GM23248 (cell line): ENCODE measurements at regions of chr14 and their contacts with region 1.

Region 1: GRCh38 chr14:29558516-29558915 is 369.1 kb downstream of the PRKD1 start:
- DNase-seq: peak; percentile 40
- H3K4me3 ChIP-seq: no peak overlapping the region
- H3K27ac ChIP-seq: no peak overlapping the region
- H3K4me1 ChIP-seq: peaks cover 11% of the 10 kb centered on the region
- H3K27me3 ChIP-seq: no peaks in the 10 kb centered on the region

Region 2: DNA sequence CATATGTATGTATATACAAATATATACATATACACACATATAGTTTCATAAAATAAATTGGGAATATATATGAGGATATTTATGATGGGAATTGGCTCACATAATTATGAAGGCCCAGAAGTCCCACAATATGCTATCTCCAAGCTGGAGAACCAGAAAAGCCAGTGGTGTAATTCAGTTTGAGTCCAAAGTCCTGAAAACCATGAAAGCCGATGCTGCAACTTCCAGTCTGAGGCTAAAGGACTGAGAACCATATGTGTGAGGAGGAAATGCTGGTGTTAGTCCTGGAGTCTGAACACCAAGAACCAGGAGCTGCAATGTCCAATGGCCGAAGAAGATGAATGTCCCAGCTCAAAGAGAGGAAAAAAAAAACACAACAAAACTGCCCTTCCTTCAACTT is 434.6 kb after region 1 on chr14:
- in situ Hi-C with region 1: no loop called
- DNase-seq: no peak
- H3K4me3 ChIP-seq: no peak overlapping the region
- H3K27ac ChIP-seq: no peak overlapping the region
- H3K4me1 ChIP-seq: no peaks in the 10 kb centered on the region
- H3K27me3 ChIP-seq: no peaks in the 10 kb centered on the region

Region 3: DNA sequence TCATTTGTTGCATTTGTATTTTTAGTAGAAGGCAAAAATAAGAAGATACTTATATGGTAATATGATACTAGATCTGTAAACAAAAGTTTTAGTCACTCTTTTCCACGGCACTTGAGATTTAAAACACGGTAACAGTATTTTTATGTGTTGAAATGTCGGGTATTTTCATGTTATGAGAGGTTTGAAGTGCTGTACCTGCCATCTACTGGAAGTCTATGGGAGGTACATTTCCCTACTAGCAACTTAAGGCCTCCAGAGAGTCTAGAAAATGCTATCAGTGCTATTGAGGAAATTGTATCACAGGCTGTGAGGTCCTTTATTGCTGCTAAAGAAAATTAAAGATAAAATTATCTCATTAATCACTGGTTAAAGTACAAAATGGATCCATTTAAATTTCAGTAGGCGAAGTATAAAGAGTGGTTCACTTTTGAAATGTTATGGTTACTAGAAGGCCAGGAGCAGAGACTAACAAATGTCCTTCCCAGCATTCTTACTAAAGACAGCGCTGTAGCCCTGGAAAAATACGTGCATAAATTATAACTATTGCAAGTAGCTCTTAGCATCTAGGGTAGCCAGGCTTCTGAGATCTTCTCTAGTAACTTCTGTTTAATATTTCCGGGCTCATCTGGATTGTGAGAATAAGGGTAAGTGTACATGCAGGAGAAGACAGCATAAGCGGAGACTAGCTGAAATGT is 446.7 kb after region 1 on chr14:
- in situ Hi-C with region 1: loop called (anchors 10 kb)
- DNase-seq: peak; percentile 75
- H3K4me3 ChIP-seq: peak overlapping the region; percentile 51
- H3K27ac ChIP-seq: no peak overlapping the region
- H3K4me1 ChIP-seq: peaks cover 7% of the 10 kb centered on the region; the same call in 1 of the 2 replicates
- H3K27me3 ChIP-seq: no peaks in the 10 kb centered on the region